ENCODE measurements at regions of chr3 and their contacts with region 1.

Region 1: DNA sequence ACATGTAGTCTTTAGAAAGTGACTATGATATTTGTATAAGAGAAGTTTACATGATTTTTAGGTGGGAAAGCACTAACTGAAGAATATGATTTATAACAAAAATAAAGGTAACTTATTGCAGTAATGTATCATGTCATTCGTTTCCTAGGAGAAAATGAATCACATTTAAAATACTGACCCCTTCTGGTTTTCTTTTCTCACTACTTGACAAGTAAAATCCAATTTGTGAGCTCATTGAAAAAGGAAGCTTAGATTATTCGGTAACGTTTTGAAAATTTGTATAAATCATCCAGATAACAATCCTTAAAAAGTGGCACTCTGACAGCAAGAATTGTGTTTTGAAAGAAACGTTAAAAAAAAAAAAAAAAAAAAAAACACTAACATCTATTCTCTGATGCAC is 39.0 kb downstream of the NSUN3 start:
- DNase-seq: peak; percentile 3
- ATAC-seq: no peak
- H3K4me3 ChIP-seq: no peak overlapping the region
- H3K27ac ChIP-seq: no peak overlapping the region
- H3K4me1 ChIP-seq: no peaks in the 10 kb centered on the region
- H3K27me3 ChIP-seq: no peaks in the 10 kb centered on the region
- CTCF ChIP-seq: peak in 2 of 3 experiments; percentile 22 to 44; a peak in 3 of 6 replicates
- POLR2A ChIP-seq: no peak
- RAD21 ChIP-seq: no peak

Region 2: GRCh38 chr3:94115482-94115881 is 13.6 kb after region 1 on chr3:
- CTCF ChIA-PET with region 1: interaction called, 11 read pairs
- POLR2A ChIA-PET with region 1: no interaction called
- RAD21 ChIA-PET with region 1: no interaction called
- intact Hi-C with region 1: no loop called
- DNase-seq: peak; percentile 3
- ATAC-seq: 0 out of 2 replicates have a peak, but pooled peaks have one; percentile 42
- H3K4me3 ChIP-seq: no peak overlapping the region
- H3K27ac ChIP-seq: no peak overlapping the region
- H3K4me1 ChIP-seq: no peaks in the 10 kb centered on the region
- H3K27me3 ChIP-seq: no peaks in the 10 kb centered on the region
- CTCF ChIP-seq: peak; percentile 16 to 48 (median 29); a peak in 4 of 6 replicates
- POLR2A ChIP-seq: no peak
- RAD21 ChIP-seq: peak; percentile 43; the same call in 1 of the 2 replicates

Region 3: DNA sequence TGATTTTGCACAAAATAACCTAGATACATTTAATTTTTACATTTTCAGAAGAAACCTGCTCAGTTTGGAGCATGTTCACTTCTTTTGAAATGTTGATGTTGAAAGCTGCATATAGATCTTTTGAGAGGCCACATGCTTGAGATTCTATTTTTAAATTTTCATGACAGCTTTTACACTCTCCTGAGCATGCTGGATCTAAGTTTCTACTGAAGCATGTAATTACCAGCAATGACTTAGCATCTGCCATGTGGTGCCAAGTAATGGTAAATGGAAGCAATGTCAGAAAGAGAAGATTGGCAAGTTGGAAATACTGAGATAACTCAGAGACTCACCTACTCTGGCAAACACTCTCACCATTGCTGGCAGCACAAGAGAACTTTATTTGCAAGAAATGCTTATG is 271.6 kb after region 1 on chr3:
- CTCF ChIA-PET with region 1: no interaction called
- POLR2A ChIA-PET with region 1: no interaction called
- RAD21 ChIA-PET with region 1: no interaction called
- intact Hi-C with region 1: no loop called
- DNase-seq: no peak
- ATAC-seq: no peak
- H3K4me3 ChIP-seq: no peak overlapping the region
- H3K27ac ChIP-seq: no peak overlapping the region
- H3K4me1 ChIP-seq: no peaks in the 10 kb centered on the region
- H3K27me3 ChIP-seq: no peaks in the 10 kb centered on the region
- CTCF ChIP-seq: no peak
- POLR2A ChIP-seq: no peak
- RAD21 ChIP-seq: no peak

Region 4: DNA sequence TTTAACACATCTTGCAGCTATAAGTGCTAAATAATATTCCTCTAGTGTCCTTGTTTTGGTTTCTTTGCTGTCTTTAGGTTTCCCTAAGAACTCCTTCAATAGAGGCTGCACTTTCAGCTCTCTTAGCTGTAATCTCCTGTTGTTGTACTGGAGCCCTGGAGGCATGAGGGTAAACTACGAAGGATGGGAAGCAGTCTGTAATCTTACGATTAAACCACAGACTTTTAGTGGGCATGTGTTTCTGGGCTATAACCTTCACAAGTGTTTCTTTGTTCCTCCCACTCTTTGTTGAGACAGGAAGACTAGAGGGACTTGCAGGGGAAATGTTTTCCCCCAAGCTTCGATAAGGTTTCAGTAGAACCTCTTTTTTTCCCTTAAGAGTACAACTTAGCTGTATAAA is 1019.1 kb after region 1 on chr3:
- CTCF ChIA-PET with region 1: no interaction called
- POLR2A ChIA-PET with region 1: no interaction called
- RAD21 ChIA-PET with region 1: no interaction called
- intact Hi-C with region 1: no loop called
- DNase-seq: no peak
- ATAC-seq: no peak
- H3K4me3 ChIP-seq: no peak overlapping the region
- H3K27ac ChIP-seq: no peak overlapping the region
- H3K4me1 ChIP-seq: no peaks in the 10 kb centered on the region
- H3K27me3 ChIP-seq: no peaks in the 10 kb centered on the region
- CTCF ChIP-seq: no peak
- POLR2A ChIP-seq: no peak
- RAD21 ChIP-seq: no peak

Region 5: DNA sequence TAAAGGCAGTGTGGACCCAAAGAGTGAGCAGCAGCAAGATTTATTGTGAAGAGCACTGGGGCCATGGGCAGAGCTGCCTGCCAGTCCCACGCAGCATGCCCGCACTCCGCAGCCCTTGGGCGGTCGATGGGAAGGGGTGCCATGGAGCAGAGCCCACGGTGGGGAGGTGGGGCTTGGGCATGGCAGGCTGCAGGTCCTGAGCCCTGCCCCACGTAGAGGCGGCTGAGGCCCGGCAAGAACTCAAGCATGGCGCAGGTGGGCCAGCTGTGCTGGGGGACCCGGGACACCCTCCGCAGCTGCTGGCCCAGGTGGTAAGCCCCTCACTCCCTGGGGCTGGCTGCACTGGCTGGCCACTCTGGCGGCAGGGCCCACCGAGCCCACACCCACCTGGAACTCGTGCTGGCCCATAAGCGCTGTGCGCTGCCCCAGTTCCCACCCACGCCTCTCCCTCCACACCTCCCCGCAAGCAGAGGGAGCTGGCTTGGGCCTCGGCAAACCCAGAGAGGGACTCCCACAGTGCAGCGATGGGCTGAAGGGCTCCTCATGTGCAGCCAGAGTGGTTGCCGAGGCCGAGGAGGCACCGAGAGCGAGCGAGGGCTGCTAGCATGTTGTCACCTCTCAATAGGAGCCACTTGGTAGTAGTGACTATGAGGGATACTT is 1493.7 kb after region 1 on chr3:
- CTCF ChIA-PET with region 1: no interaction called
- POLR2A ChIA-PET with region 1: no interaction called
- RAD21 ChIA-PET with region 1: no interaction called
- intact Hi-C with region 1: no loop called
- DNase-seq: no peak
- ATAC-seq: no peak
- H3K4me3 ChIP-seq: no peak overlapping the region
- H3K27ac ChIP-seq: no peak overlapping the region
- H3K4me1 ChIP-seq: no peaks in the 10 kb centered on the region
- H3K27me3 ChIP-seq: no peaks in the 10 kb centered on the region
- CTCF ChIP-seq: no peak
- POLR2A ChIP-seq: no peak
- RAD21 ChIP-seq: no peak